ENCODE measurements at regions of chr20 and their contacts with region 1.

Region 1: DNA sequence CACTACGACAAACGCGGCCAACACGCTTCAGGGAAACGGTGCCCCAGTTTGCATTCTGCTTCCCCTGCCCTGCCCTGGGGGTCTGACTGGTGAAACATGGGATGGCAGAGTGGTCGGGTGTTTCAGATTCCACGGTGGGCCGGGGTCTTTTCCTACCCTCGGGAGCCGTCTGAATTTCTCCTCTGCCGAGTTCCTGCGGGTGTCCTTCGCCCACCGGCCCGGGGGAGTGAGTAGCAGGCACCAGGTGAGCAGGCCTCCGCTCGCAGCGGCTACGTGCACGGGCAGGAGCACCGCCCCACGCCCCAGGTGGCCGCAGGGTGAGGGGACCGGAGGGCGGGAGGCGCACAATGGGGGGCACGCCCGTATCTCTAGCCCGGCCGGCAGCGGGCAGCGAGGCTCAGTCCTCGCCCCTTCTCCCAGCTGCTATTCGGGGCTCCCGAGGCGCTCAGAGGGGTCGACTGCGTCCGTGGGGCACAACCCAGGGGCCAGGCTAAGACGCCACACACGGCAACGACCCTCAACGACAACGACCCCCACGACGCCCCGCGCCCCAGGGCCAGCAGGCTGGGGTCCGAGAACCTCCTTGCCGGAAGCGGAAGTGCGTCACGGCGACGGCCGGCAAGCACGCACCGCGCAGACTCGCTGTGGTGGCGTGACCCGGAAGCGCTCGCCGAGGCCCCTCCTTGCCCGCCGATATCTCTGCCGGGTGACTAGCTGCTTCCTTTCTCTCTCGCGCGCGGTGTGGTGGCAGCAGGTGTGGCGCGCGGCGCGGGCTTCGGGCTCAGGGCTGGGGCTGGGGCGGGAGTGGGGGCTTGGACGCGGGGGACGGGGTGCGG is at the start of gene RPS21:
- DNase-seq: peak; percentile 94 to 97 (median 95)
- ATAC-seq: peak; percentile 84 to 95 (median 94)
- H3K4me3 ChIP-seq: peak within 1 kb of the TSS; percentile 57 to 100 (median 93)
- H3K27ac ChIP-seq: peak within 1 kb of the TSS; percentile 88 to 98 (median 93)
- H3K4me1 ChIP-seq: peaks cover 8 to 37% (median 29%) of the 10 kb centered on the region in 12 donors
- H3K27me3 ChIP-seq: no peaks in the 10 kb centered on the region
- CTCF ChIP-seq: peak in 1 of 12 donors; percentile 20
- POLR2A ChIP-seq: peak in 1 of 2 donors; percentile 86
- total RNA-seq, gene RPS21: 434 to 831 (median 670) TPM

Region 2: DNA sequence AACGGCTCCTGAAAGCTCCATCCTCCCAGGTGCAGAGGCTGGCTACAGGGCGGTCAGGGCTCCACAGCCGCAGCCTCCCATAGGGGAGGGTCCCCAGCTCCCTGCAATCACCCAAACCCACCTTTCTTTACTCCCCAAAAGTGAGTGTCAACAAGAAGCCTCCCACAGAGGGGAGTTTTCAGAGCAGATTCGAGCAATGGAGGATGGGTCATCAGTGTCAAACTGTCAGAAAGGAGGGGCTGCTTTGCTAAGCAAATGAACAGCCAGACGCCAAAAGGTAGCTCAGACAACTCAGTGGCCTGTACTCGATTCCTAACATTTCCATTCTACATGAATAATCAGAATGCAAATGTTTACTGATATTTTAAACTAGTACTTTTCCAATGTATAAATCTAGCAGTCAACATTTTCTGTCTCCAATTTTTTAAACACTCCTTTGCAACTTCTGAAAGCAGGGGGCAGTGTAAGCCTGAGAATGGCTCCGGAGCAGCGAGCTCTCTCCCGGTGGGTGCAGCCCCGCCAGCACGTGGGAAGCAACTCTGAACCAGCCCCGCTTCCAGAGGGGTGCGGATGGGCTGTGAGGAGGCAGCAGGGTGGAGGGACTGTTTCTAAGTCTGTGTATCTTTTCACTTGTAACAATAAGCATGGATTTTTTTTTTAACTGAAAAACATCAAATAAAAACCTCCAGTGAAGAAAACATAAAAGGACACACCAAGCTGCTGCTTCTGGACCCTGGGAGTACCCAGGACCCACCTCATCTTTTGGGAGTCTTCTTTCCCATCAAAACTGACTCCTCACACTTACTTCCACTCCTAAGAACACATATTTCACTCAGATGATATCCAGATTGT is 375.8 kb before region 1 on chr20:
- intact Hi-C with region 1: loop called in 3 of 10 experiments (anchors 10 kb)
- DNase-seq: peak; percentile 47 to 66 (median 59)
- ATAC-seq: peak in 3 of 4 donors; percentile 47 to 78 (median 71)
- H3K4me3 ChIP-seq: no peak overlapping the region
- H3K27ac ChIP-seq: no peak overlapping the region
- H3K4me1 ChIP-seq: peaks cover 0 to 6% (median 0%) of the 10 kb centered on the region in 12 donors
- H3K27me3 ChIP-seq: no peaks in the 10 kb centered on the region
- CTCF ChIP-seq: peak; percentile 45 to 77 (median 68)
- POLR2A ChIP-seq: no peak

Region 3: GRCh38 chr20:62143118-62143973 is 243.3 kb before region 1 on chr20 and contains the starts of genes PSMA7 and SS18L1:
- intact Hi-C with region 1: loop called in 2 of 10 experiments (anchors 5 to 10 kb)
- DNase-seq: peak; percentile 87 to 94 (median 91)
- ATAC-seq: peak; percentile 76 to 94 (median 92)
- H3K4me3 ChIP-seq: peak within 1 kb of the TSS; percentile 75 to 100 (median 88)
- H3K27ac ChIP-seq: peak within 1 kb of the TSS; percentile 89 to 100 (median 98)
- H3K4me1 ChIP-seq: peaks cover 6 to 41% (median 30%) of the 10 kb centered on the region in 12 donors
- H3K27me3 ChIP-seq: no peaks in the 10 kb centered on the region
- CTCF ChIP-seq: no peak
- POLR2A ChIP-seq: peak; percentile 87 to 96
- total RNA-seq, gene PSMA7: 172 to 432 (median 233) TPM
- total RNA-seq, gene SS18L1: 6.5 to 12.4 (median 8.6) TPM

Region 4: DNA sequence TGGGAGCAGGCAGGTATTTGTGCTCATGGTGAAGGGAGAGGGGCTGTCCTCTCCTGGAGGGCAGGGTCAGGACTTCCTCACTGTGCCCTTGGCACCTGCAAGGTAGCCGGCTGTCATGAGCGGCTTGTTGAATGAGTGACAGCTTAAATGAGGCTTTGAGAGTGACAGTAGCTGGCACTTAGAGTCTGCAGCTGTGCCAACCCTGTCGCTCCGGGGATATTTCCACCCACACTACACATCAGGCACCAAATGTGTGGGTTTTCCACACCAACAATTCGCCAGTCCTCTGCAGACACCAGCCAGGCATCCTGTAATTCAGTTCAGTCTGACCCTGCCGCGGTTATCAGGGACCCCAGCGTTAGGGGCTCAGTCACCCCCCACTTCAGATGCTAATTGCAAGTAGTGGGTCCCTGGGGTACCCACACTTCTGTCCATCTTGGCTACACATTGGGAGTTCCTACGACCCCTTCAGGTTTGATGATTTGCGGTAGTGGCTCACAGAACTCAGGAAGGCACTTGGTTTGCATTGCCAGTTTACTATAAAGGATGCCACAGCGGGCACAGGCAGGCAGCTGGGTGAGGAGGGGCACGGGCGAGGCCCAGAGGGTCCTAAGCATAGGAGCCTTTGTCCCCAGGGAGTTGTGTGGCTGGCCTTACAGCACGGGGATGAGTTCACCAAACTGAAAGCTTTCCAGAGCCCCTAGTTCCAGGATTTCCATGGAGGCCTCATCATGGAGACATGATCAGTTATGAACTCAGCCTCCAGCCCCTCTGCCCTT is 194.6 kb before region 1 on chr20:
- intact Hi-C with region 1: loop called in 4 of 10 experiments (anchors 5 to 10 kb)
- DNase-seq: peak in 1 of 5 donors; percentile 27
- ATAC-seq: peak in 3 of 4 donors; percentile 26 to 40 (median 29)
- H3K4me3 ChIP-seq: no peak overlapping the region
- H3K27ac ChIP-seq: no peak overlapping the region
- H3K4me1 ChIP-seq: peaks cover 4 to 22% (median 9%) of the 10 kb centered on the region in 12 donors
- H3K27me3 ChIP-seq: no peaks in the 10 kb centered on the region
- CTCF ChIP-seq: no peak
- POLR2A ChIP-seq: no peak

Region 5: GRCh38 chr20:62302341-62303058 is 84.1 kb before region 1 on chr20 and contains the start of gene ADRM1:
- intact Hi-C with region 1: loop called (anchors 1 to 5 kb)
- DNase-seq: peak; percentile 97 to 98 (median 97)
- ATAC-seq: peak; percentile 83 to 90 (median 90)
- H3K4me3 ChIP-seq: peak within 1 kb of the TSS; percentile 59 to 96 (median 88)
- H3K27ac ChIP-seq: peak within 1 kb of the TSS; percentile 89 to 100 (median 98)
- H3K4me1 ChIP-seq: peaks cover 9 to 36% (median 25%) of the 10 kb centered on the region in 12 donors
- H3K27me3 ChIP-seq: no peaks in the 10 kb centered on the region
- CTCF ChIP-seq: peak; percentile 88 to 99 (median 98)
- POLR2A ChIP-seq: peak; percentile 38 to 81
- total RNA-seq, gene ADRM1: 66.8 to 218 (median 79.8) TPM

Region 6: DNA sequence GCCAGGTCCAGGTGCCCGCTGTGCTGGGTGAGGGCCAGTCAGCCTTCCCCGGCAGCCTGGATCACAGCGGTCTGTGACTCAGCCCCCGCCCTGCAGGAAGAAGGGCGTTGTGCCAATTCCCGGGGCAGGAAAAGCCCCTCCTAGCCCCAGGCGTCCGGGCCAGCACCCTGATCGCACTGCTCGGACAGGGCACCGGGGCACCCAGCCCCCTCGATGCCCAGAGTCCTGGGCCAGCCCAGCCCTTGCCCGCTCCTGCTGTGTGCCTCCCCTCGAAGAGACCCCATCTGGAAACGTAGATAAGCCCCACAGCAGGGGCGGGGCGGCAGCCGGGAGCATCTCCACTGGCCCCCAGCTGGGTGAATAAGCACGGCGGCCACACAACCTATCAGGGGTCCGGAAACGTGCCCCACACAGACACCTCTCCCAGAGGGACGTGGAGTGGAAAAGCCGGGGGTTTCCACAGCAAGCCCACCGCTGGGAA is 29.4 kb before region 1 on chr20:
- intact Hi-C with region 1: loop called in 3 of 10 experiments (anchors 2 kb)
- DNase-seq: peak; percentile 85 to 92 (median 87)
- ATAC-seq: peak; percentile 17 to 56 (median 44)
- H3K4me3 ChIP-seq: peak overlapping the region in 11 of 12 donors; percentile 2 to 48 (median 34)
- H3K27ac ChIP-seq: peak overlapping the region; percentile 69 to 97 (median 93)
- H3K4me1 ChIP-seq: peaks cover 36 to 96% (median 84%) of the 10 kb centered on the region in 12 donors
- H3K27me3 ChIP-seq: peaks cover 0 to 4% (median 0%) of the 10 kb centered on the region in 9 donors
- CTCF ChIP-seq: no peak
- POLR2A ChIP-seq: peak in 1 of 2 donors; percentile 12